Body of pancreas (tissue), 4 donors: ENCODE measurements at regions of chr18 and their contacts with region 1.

Region 1: GRCh38 chr18:21359746-21360145 is 117.7 kb downstream of the GREB1L start:
- DNase-seq: no peak
- ATAC-seq: no peak
- H3K4me3 ChIP-seq: no peak overlapping the region
- H3K27ac ChIP-seq: no peak overlapping the region
- H3K4me1 ChIP-seq: no peaks in the 10 kb centered on the region
- H3K27me3 ChIP-seq: no peaks in the 10 kb centered on the region
- CTCF ChIP-seq: no peak
- POLR2A ChIP-seq: no peak

Region 2: DNA sequence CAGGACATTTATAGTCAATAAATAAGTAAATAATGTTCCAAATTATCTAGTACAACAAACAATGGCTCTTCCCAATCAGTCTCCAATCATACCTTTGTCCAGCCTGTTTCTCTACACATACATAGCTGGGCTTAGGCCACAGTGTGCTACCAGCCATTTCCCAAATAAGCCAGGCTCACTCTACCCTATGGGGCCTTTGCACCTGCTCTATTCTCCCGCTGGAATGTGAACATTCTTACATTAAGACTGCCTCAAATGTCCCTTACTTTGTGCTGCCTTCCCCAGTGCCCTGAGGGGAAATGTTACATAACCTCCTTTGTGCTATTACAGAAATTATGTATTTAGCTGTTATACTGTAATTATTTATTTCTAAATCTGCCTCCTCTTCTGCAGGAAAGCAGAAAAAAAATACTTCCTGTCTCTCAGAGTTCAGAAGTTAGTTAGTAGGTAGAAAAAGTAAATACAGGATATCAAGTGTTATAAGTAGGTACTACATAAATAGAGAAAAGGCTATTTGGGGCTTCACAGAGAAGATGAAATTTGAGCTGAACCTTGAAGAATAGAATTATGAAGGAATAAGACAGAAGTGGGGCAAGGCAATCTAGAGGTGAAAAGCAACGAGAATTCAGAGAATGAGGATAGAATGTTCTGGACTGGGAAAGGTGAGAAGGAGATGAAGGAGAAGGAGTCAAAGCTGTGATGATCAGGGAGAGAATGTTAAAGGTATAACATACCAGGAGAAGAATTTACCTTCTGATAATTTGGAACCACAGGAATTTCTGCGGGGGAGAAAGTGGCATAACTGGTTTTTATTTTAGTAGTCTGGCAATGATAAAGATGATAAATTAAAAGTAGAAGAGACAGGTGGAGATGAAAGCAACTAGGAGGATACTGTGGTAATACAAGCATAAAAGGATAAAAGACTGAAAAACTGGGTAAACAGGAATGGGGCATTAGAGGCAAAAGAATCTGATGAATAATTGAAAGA is 285.1 kb before region 1 on chr18:
- intact Hi-C with region 1: no loop called
- DNase-seq: no peak
- ATAC-seq: peak; percentile 27
- H3K4me3 ChIP-seq: no peak overlapping the region
- H3K27ac ChIP-seq: peak overlapping the region in 1 of 4 donors; percentile 54
- H3K4me1 ChIP-seq: peaks cover 48% of the 10 kb centered on the region
- H3K27me3 ChIP-seq: no peaks in the 10 kb centered on the region
- CTCF ChIP-seq: no peak
- POLR2A ChIP-seq: no peak

Region 3: DNA sequence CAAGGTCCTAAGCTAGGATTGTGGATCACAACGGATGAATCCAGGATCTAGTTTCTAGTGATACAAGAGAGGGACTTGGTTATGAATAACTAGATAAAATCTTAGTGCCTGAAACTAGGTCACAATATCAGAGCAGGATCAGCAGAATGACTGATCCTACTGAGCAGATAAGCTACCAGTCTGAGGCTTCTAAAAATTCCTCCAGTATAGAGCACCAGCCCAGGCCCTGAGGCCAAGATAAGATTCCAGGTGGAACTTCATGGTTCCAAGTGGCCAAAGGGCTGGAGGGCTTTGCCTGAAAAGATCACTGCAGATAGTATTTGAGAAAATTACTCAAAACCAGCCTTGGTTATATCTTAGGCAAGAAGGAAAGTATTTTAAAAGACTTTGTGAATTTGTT is 44.7 kb after region 1 on chr18:
- intact Hi-C with region 1: loop called (anchors 5 kb)
- DNase-seq: no peak
- ATAC-seq: no peak
- H3K4me3 ChIP-seq: no peak overlapping the region
- H3K27ac ChIP-seq: no peak overlapping the region
- H3K4me1 ChIP-seq: no peaks in the 10 kb centered on the region
- H3K27me3 ChIP-seq: no peaks in the 10 kb centered on the region
- CTCF ChIP-seq: no peak
- POLR2A ChIP-seq: no peak